ENCODE measurements at regions of chr3 and their contacts with region 1.

Region 1: DNA sequence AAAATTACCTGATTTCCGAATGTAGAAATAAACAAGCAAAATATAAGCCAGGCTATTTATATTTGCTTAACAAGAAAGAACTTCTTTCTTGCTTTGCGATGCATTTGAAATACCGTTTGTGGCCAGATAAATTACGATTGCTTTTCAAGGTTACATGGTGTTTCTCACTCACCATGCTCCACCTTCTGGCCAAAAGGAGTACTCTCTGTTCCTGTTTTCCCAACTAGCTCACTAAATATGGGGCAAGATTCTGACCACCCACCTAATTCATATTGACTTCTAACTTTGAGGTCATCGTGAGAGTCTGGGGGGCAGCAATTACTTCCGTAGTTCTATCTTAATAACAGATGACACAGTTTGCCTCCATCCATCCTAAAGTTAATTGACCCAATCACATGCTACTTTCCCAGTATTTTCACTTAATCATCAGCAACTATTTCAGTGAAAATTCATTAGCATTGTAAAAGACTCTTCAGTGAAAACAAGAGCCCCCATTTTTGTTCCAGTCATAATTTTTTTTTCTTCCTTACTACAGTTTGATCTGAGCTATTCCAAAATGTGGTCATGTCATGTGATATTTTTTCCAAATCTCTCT is 25.9 kb downstream of the ACP3 start:
- DNase-seq: peak; percentile 51
- H3K4me3 Mint-ChIP-seq: no peak overlapping the region
- H3K27ac Mint-ChIP-seq: no peak overlapping the region
- H3K4me1 Mint-ChIP-seq: peaks cover 3% of the 10 kb centered on the region
- H3K27me3 Mint-ChIP-seq: no peaks in the 10 kb centered on the region

Region 2: DNA sequence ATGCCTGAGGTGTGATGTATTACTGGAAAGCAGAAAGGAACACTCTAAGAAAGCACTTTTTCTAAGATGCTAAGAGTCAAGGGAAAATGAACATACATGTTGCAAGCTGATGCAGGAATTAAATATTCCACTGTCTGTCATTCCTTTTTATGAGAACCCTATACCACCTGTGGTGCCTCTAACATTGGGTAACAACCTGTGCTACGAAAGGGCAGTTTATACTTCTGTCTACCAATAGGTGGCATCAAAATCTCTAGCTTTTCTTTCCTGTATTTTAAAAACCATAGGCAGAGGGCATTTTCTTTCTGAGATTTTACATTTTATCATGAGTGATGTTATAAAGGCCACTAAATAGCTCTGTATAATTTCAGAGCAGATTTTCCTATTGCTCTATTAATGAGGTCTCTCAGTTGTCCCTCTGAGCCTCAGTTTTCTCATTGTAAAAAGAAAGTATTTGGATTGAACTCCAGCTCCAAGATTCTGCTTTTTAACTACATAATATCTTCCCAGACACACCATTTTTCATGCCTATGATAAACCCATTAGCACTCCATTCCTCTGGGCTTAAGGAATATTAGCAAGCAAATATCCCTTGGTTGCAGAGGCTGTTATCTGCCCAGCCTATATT is 304.8 kb before region 1 on chr3:
- CTCF ChIA-PET with region 1: no interaction called
- intact Hi-C with region 1: loop called (anchors 1 kb)
- DNase-seq: no peak
- H3K4me3 Mint-ChIP-seq: no peak overlapping the region
- H3K27ac Mint-ChIP-seq: no peak overlapping the region
- H3K4me1 Mint-ChIP-seq: peaks cover 8% of the 10 kb centered on the region
- H3K27me3 Mint-ChIP-seq: peaks cover 60% of the 10 kb centered on the region

Region 3: DNA sequence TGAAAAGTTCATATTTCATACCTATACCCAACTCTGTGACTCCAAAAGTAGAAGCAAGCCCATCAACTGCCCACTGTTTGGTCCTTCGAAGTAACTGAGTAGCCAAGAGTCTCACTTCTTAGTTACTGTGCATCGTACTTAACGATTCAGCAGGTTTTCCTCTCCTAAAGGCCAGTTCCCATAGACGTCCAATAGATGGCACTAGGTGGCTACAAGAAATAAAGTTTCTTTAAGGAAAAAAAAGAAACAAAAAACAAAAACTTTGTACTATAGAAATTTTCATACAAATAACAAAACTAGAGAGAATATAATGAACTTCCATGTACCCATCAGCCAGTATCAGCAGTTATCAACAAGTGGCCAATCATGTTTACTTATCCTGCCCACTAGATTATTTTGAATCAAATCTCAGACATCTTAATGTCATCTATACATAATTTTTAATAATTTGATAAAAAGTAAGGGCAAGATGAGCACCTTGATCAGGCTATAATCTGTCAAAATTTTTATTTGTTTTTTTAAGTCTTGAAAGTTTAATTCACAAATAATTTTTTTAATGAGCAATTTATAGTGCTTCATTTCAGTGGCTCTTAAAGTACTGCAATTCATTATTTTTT is 89.7 kb before region 1 on chr3:
- CTCF ChIA-PET with region 1: interaction called, 5 read pairs
- intact Hi-C with region 1: loop called (anchors 1 kb)
- DNase-seq: peak; percentile 25
- H3K4me3 Mint-ChIP-seq: no peak overlapping the region
- H3K27ac Mint-ChIP-seq: no peak overlapping the region
- H3K4me1 Mint-ChIP-seq: no peaks in the 10 kb centered on the region
- H3K27me3 Mint-ChIP-seq: peaks cover 2% of the 10 kb centered on the region

Region 4: GRCh38 chr3:132416807-132417694 is 73.9 kb after region 1 on chr3 and contains the start of gene DNAJC13:
- CTCF ChIA-PET with region 1: no interaction called
- intact Hi-C with region 1: no loop called
- DNase-seq: peak; percentile 92
- H3K4me3 Mint-ChIP-seq: peak within 1 kb of the TSS; percentile 91
- H3K27ac Mint-ChIP-seq: peak within 1 kb of the TSS; percentile 90
- H3K4me1 Mint-ChIP-seq: peaks cover 22% of the 10 kb centered on the region
- H3K27me3 Mint-ChIP-seq: no peaks in the 10 kb centered on the region
- total RNA-seq, gene DNAJC13: 32.8 to 33.6 TPM

Measured in activated naive CD4-positive, alpha-beta T cell treated with anti-CD3 and anti-CD28 coated beads for 36 hours (primary cell).